ENCODE measurements at regions of chr9 and their contacts with region 1.

Region 1: GRCh38 chr9:104907278-104907951 is 20.5 kb downstream of the ABCA1 start:
- DNase-seq: peak in 4 of 5 donors; percentile 23 to 74 (median 38)
- ATAC-seq: peak in 3 of 4 donors; percentile 52 to 76 (median 62)
- H3K4me3 ChIP-seq: no peak overlapping the region
- H3K27ac ChIP-seq: peak overlapping the region in 10 of 12 donors; percentile 28 to 78 (median 55)
- H3K4me1 ChIP-seq: peaks cover 8 to 94% (median 71%) of the 10 kb centered on the region in 12 donors
- H3K27me3 ChIP-seq: no peaks in the 10 kb centered on the region
- CTCF ChIP-seq: no peak
- POLR2A ChIP-seq: no peak

Region 2: GRCh38 chr9:104780799-104781395 is 126.5 kb before region 1 on chr9:
- intact Hi-C with region 1: loop called in 1 of 10 experiments (anchors 10 kb)
- DNase-seq: no peak
- ATAC-seq: no peak
- H3K4me3 ChIP-seq: no peak overlapping the region
- H3K27ac ChIP-seq: peak overlapping the region in 2 of 12 donors; percentile 6 to 28
- H3K4me1 ChIP-seq: peaks cover 0 to 42% (median 14%) of the 10 kb centered on the region in 12 donors
- H3K27me3 ChIP-seq: no peaks in the 10 kb centered on the region
- CTCF ChIP-seq: peak in 9 of 12 donors; percentile 11 to 52 (median 33)
- POLR2A ChIP-seq: no peak

Region 3: GRCh38 chr9:104808035-104808614 is 99.3 kb before region 1 on chr9:
- intact Hi-C with region 1: loop called in 1 of 10 experiments (anchors 10 kb)
- DNase-seq: peak in 3 of 5 donors; percentile 27 to 45 (median 36)
- ATAC-seq: peak; percentile 29 to 75 (median 69)
- H3K4me3 ChIP-seq: no peak overlapping the region
- H3K27ac ChIP-seq: no peak overlapping the region
- H3K4me1 ChIP-seq: peaks cover 0 to 9% (median 0%) of the 10 kb centered on the region in 12 donors
- H3K27me3 ChIP-seq: no peaks in the 10 kb centered on the region
- CTCF ChIP-seq: peak in 10 of 12 donors; percentile 15 to 57 (median 40)
- POLR2A ChIP-seq: no peak

Region 4: GRCh38 chr9:104868687-104869404 is 38.6 kb before region 1 on chr9:
- intact Hi-C with region 1: loop called in 1 of 10 experiments (anchors 5 kb)
- DNase-seq: peak; percentile 67 to 79 (median 72)
- ATAC-seq: peak; percentile 89 to 93 (median 92)
- H3K4me3 ChIP-seq: no peak overlapping the region
- H3K27ac ChIP-seq: peak overlapping the region in 11 of 12 donors; percentile 36 to 81 (median 64)
- H3K4me1 ChIP-seq: peaks cover 8 to 70% (median 47%) of the 10 kb centered on the region in 12 donors
- H3K27me3 ChIP-seq: no peaks in the 10 kb centered on the region
- CTCF ChIP-seq: no peak
- POLR2A ChIP-seq: no peak

Region 5: GRCh38 chr9:104879555-104880309 is 27.7 kb before region 1 on chr9:
- intact Hi-C with region 1: loop called in 1 of 10 experiments (anchors 2 kb)
- DNase-seq: no peak
- ATAC-seq: peak in 3 of 4 donors; percentile 22 to 73 (median 47)
- H3K4me3 ChIP-seq: no peak overlapping the region
- H3K27ac ChIP-seq: peak overlapping the region in 9 of 12 donors; percentile 3 to 81 (median 54)
- H3K4me1 ChIP-seq: peaks cover 0 to 34% (median 17%) of the 10 kb centered on the region in 12 donors
- H3K27me3 ChIP-seq: no peaks in the 10 kb centered on the region
- CTCF ChIP-seq: no peak
- POLR2A ChIP-seq: no peak